ENCODE measurements at regions of chr14 and their contacts with region 1.

Region 1: GRCh38 chr14:35365130-35366055 is 39.2 kb downstream of the NFKBIA start:
- DNase-seq: peak; percentile 93
- ATAC-seq: peak; percentile 96
- H3K4me3 Mint-ChIP-seq: peak overlapping the region; percentile 36
- H3K27ac Mint-ChIP-seq: peak overlapping the region; percentile 97
- H3K4me1 Mint-ChIP-seq: peaks cover 59% of the 10 kb centered on the region
- H3K27me3 Mint-ChIP-seq: no peaks in the 10 kb centered on the region

Region 2: DNA sequence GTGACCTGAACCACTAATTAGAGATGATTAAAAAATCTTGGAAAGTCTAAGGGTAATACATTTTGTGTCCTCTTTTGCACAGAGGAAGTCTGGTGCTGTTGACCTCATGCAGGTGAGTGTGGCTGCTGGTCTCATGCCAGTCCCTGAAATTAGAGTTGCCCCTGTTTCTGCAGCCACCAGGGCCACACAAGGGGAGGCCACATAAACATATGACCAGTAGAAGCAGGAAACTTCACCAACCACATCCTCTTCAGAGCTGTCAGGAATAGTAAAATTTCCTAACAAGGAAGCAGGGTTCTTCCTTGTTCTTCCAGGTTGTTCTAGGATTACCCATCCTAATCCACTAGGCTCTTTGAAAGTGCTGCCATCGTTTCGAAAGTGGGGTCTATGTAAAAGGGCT is 44.9 kb before region 1 on chr14:
- CTCF ChIA-PET with region 1: interaction called, 4 read pairs
- POLR2A ChIA-PET with region 1: interaction called, 23 read pairs
- intact Hi-C with region 1: loop called in 1 of 2 experiments (anchors 1 kb)
- DNase-seq: no peak
- ATAC-seq: peak; percentile 23
- H3K4me3 Mint-ChIP-seq: no peak overlapping the region
- H3K27ac Mint-ChIP-seq: no peak overlapping the region
- H3K4me1 Mint-ChIP-seq: no peaks in the 10 kb centered on the region
- H3K27me3 Mint-ChIP-seq: no peaks in the 10 kb centered on the region

Region 3: DNA sequence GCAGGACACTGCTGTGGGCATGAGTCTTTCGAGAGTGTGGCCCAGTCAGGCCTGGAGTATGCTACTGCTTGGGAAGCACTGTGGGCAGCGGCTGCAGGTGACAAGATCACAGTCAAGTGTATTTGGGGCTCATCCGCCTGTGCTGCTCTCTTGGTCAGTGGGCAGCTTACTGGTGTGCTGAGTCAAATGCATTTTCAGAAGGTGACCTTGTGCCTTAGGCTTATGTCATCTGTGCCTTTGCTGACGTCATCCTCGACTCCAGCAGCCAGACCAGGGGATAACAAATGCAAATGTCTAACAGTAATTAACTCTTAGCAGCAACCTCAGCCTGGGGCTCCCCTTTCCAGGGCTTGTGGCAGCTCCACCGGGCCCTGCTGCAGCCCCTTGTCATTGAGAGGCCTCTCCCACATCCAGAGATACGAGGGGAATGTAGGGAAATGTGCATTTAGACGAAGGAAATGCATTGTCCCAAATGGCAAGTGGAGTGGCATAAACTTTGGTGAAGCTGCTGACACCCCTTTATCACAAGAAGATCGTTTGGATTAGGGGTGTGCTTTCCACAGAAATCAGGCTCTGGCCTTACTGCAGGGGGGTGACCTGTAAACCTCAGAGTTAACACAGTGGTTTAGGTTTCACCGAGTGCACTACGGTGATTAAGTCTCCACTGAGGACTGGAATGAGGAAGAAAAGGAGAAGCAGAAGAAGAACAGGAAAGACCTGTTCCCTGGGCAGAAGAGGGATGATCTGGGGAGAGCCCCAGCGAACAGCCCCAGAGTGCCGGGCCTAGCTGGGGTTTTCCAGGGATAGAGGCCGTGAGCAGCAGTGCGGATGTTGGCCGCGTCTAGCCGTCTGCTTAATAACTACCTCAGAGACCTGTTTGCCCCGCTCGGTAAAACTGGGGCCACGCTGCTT is 33.5 kb before region 1 on chr14:
- CTCF ChIA-PET with region 1: interaction called, 3 read pairs
- POLR2A ChIA-PET with region 1: interaction called, 20 read pairs
- intact Hi-C with region 1: loop called in 1 of 2 experiments (anchors 1 kb)
- DNase-seq: no peak
- ATAC-seq: no peak
- H3K4me3 Mint-ChIP-seq: no peak overlapping the region
- H3K27ac Mint-ChIP-seq: peak overlapping the region; percentile 96
- H3K4me1 Mint-ChIP-seq: peaks cover 32% of the 10 kb centered on the region
- H3K27me3 Mint-ChIP-seq: no peaks in the 10 kb centered on the region

Region 4: GRCh38 chr14:35398071-35398632 is 32.8 kb after region 1 on chr14:
- CTCF ChIA-PET with region 1: interaction called, 19 read pairs
- POLR2A ChIA-PET with region 1: interaction called, 87 read pairs
- intact Hi-C with region 1: loop called in 1 of 2 experiments (anchors 1 kb)
- DNase-seq: no peak
- ATAC-seq: no peak
- H3K4me3 Mint-ChIP-seq: no peak overlapping the region
- H3K27ac Mint-ChIP-seq: no peak overlapping the region
- H3K4me1 Mint-ChIP-seq: peaks cover 42% of the 10 kb centered on the region
- H3K27me3 Mint-ChIP-seq: no peaks in the 10 kb centered on the region

Region 5: GRCh38 chr14:35410858-35411257 is 45.5 kb after region 1 on chr14:
- CTCF ChIA-PET with region 1: interaction called, 19 read pairs
- POLR2A ChIA-PET with region 1: interaction called, 12 read pairs
- intact Hi-C with region 1: no loop called
- DNase-seq: no peak
- ATAC-seq: no peak
- H3K4me3 Mint-ChIP-seq: no peak overlapping the region
- H3K27ac Mint-ChIP-seq: no peak overlapping the region
- H3K4me1 Mint-ChIP-seq: peaks cover 41% of the 10 kb centered on the region
- H3K27me3 Mint-ChIP-seq: no peaks in the 10 kb centered on the region